H1 (cell line): ENCODE measurements at regions of chr6 and their contacts with region 1.

Region 1: DNA sequence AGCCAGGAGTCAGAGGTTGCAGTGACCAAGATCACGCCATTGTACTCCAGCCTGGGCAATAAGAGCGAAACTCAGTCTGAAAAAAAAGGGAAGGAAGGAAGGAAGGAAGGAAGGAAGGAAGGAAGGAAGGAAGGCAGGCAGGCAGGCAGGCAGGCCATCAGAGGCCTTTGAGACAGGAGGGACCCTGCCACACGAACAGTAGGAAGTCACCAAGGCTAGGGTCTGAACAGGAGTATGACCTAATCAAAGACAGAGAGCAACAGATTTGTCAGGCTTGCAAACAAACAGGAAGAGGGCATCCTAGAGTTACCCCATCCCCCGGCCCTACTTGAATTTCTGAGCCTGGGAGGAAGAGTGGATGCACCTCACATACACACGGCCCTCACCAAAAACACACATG is 67.1 kb downstream of the FGD2 start:
- DNase-seq: no peak
- H3K4me3 ChIP-seq: no peak overlapping the region
- H3K27ac ChIP-seq: no peak overlapping the region
- H3K4me1 ChIP-seq: peaks cover 4 to 14% (median 11%) of the 10 kb centered on the region in 4 experiments
- H3K27me3 ChIP-seq: no peaks in the 10 kb centered on the region
- CTCF ChIP-seq: no peak
- EP300 ChIP-seq: no peak
- POLR2A ChIP-seq: no peak
- RAD21 ChIP-seq: no peak; a peak in 1 of 4 replicates

Region 2: DNA sequence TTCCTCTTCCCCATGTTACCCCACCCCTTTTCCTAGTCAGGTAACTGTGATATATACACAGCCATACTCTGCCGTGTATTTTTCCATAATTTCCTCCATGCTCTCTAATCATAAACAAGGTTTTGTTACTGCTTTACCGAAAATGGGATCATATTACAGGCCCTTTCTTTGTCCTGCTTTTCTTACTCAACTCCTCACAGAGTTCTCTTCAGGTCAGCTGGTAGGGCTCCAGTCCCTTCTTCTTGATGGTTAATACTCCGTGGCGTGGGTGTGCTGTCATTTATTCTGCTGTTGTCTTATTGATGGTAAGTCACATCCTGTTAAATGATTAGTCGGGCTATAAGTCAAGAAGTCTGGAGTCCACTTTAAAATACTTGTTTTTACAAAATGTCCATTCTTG is 142.9 kb before region 1 on chr6:
- CTCF ChIA-PET with region 1: no interaction called
- POLR2A ChIA-PET with region 1: no interaction called
- DNase-seq: no peak
- H3K4me3 ChIP-seq: no peak overlapping the region
- H3K27ac ChIP-seq: no peak overlapping the region
- H3K4me1 ChIP-seq: no peaks in the 10 kb centered on the region
- H3K27me3 ChIP-seq: no peaks in the 10 kb centered on the region
- CTCF ChIP-seq: no peak
- EP300 ChIP-seq: no peak
- POLR2A ChIP-seq: no peak
- RAD21 ChIP-seq: no peak

Region 3: DNA sequence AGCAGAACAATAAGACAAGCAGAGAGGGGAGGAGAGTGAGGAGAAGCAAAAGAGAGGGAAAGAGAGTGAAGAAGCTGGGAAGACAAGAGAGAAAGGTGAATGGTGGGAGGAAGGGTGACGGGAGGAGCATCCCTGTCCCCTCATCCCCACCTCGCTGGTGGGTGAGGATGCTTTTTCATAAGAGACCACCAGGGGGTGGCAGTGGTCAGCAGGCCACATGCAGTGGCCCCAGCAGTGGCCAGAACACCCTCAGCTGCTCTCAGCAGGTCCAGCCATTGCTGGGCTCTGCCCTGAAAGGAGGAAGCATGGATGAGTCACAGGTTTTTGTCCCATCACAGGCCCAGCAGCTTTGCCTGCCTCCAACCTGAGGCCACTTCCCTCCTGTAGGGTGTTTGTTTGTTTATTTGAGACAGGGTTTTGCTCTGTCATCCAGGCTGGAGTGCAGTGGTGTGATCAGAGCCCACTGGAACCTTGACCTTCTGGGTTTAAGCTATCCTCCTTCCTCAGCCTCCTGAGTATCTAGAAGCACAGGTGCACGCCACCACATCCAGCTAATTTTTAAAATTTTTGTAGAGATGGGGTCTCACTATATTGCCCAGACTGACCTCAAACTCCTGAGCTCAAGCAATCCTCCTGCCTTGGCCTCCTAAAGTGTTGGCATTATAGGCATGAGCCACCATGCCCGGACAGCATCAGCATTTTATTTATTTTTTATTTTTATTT is 43.1 kb before region 1 on chr6:
- CTCF ChIA-PET with region 1: interaction called, 14 read pairs
- POLR2A ChIA-PET with region 1: no interaction called
- DNase-seq: peak in 1 of 2 experiments; percentile 82
- H3K4me3 ChIP-seq: no peak overlapping the region
- H3K27ac ChIP-seq: no peak overlapping the region; the same call in 1 of the 2 replicates
- H3K4me1 ChIP-seq: no peaks in the 10 kb centered on the region
- H3K27me3 ChIP-seq: no peaks in the 10 kb centered on the region
- CTCF ChIP-seq: peak; percentile 76 to 88 (median 80)
- EP300 ChIP-seq: no peak
- POLR2A ChIP-seq: no peak
- RAD21 ChIP-seq: peak; percentile 82 to 84

Region 4: GRCh38 chr6:37059344-37060206 is 13.0 kb before region 1 on chr6:
- CTCF ChIA-PET with region 1: interaction called, 91 read pairs
- POLR2A ChIA-PET with region 1: interaction called, 18 read pairs
- DNase-seq: peak in 1 of 2 experiments; percentile 82
- H3K4me3 ChIP-seq: peak overlapping the region in 3 of 4 experiments; percentile 20 to 46 (median 24); a peak in 4 of 8 replicates
- H3K27ac ChIP-seq: peak overlapping the region; percentile 94
- H3K4me1 ChIP-seq: peaks cover 4 to 31% (median 22%) of the 10 kb centered on the region in 4 experiments
- H3K27me3 ChIP-seq: no peaks in the 10 kb centered on the region
- CTCF ChIP-seq: peak in 2 of 3 experiments; percentile 73 to 82; a peak in 3 of 4 replicates
- EP300 ChIP-seq: peak in 1 of 2 experiments; percentile 19; a peak in 1 of 3 replicates
- POLR2A ChIP-seq: peak in 1 of 2 experiments; percentile 78; a peak in 2 of 3 replicates
- RAD21 ChIP-seq: peak; percentile 82 to 83

Region 5: DNA sequence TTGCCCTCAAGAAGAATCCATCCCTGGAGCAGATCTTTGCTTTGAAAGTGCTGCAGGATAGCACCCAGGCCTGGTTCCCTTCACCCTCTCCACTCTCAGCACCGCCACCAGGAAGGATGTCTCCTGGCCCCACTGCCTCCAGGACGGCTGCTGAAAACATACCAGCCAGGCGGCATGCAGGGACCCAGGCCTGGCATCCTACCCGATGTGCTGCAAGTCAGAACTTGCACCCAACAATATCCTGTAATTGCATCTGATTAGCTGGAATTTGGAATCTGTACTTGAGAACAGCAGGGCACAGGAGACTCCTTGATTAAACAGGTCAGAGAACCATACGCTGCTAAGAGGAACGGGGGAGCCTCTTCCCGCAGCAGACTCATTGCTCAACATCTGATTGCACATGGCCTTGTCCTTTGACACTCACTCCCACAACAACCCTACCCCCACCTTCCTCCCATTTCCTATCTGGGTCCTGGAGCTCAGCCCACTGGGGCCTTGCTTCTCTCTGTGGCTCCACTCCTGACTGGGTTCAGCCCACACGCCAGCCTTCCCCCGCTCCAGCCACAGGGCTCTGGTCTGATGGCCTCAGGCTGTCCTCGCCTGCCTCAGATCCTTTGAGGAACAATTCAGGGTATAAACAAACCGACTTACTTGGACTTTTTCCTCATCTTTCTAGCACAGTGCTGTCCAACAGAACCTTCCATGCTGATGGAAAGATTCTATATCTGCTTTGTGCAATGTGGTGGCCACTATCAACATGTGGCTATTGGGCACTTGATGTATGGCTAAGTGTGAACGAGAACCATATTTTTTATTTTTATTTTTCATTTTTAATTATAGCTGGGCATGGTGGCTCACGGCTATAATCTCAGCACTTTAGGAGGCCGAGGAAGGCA is 11.0 kb after region 1 on chr6:
- CTCF ChIA-PET with region 1: interaction called, 7 read pairs
- POLR2A ChIA-PET with region 1: interaction called, 13 read pairs
- DNase-seq: no peak
- H3K4me3 ChIP-seq: no peak overlapping the region
- H3K27ac ChIP-seq: no peak overlapping the region
- H3K4me1 ChIP-seq: peaks cover 0 to 2% (median 0%) of the 10 kb centered on the region in 4 experiments; a peak in 1 of 7 replicates
- H3K27me3 ChIP-seq: no peaks in the 10 kb centered on the region
- CTCF ChIP-seq: no peak
- EP300 ChIP-seq: no peak
- POLR2A ChIP-seq: no peak
- RAD21 ChIP-seq: no peak

Region 6: GRCh38 chr6:37125783-37126492 is 53.4 kb after region 1 on chr6:
- CTCF ChIA-PET with region 1: no interaction called
- POLR2A ChIA-PET with region 1: interaction called, 10 read pairs
- DNase-seq: peak; percentile 74 to 81
- H3K4me3 ChIP-seq: peak overlapping the region; percentile 12 to 58 (median 39); a peak in 7 of 8 replicates
- H3K27ac ChIP-seq: peak overlapping the region; percentile 94
- H3K4me1 ChIP-seq: peaks cover 19 to 42% (median 31%) of the 10 kb centered on the region in 4 experiments
- H3K27me3 ChIP-seq: no peaks in the 10 kb centered on the region
- CTCF ChIP-seq: no peak
- EP300 ChIP-seq: peak in 1 of 2 experiments; percentile 26; a peak in 1 of 3 replicates
- POLR2A ChIP-seq: peak in 1 of 2 experiments; percentile 53; a peak in 2 of 3 replicates
- RAD21 ChIP-seq: peak in 1 of 2 experiments; percentile 0; a peak in 1 of 4 replicates

Region 7: DNA sequence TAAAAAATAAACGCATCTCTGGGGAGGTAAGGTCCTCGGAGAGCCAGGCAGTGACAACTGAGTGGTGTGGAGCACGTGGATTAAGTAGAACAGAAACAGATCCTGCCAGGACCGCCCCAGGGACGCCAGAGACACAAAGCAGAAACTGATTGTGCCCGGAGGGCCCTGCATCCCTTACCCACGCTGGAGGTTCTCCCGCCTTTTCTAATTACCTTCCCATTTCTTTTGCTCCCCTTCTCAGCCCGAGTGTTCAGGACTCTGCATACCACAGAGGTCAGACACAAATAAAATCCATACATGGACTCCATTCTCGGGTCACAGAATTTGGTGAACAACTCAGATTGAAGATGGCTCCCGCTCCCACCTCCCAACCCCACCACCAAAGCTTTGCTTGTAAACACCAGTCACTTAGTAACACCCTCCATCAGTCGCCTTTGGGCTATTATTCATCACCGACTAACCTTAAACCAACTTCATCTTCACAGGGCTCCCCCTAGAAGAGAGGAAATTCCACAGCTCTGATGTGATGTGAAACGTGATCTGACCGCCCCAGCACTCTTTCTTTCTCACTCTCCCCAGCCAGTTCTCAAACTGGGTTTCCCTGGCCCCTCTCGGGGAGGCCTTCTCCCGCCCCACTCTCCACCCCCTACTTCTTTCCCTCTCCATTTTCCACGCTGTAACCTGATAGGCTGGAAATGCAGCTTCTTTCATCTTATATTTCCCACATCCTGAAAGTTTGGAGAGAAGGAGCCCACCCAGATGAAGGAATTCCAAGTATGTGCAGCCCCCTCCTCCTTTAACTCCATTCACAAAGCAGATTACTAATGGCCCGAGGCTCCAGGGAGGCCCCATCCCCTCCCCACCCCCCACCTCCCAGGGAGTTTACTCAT is 64.9 kb after region 1 on chr6:
- CTCF ChIA-PET with region 1: interaction called, 3 read pairs
- POLR2A ChIA-PET with region 1: interaction called, 18 read pairs
- DNase-seq: peak; percentile 77 to 93
- H3K4me3 ChIP-seq: peak overlapping the region; percentile 49 to 90 (median 87)
- H3K27ac ChIP-seq: peak overlapping the region; percentile 98
- H3K4me1 ChIP-seq: peaks cover 15 to 37% (median 28%) of the 10 kb centered on the region in 4 experiments
- H3K27me3 ChIP-seq: no peaks in the 10 kb centered on the region
- CTCF ChIP-seq: no peak
- EP300 ChIP-seq: peak; percentile 29 to 86; a peak in 2 of 3 replicates
- POLR2A ChIP-seq: peak in 1 of 2 experiments; percentile 95; a peak in 2 of 3 replicates
- RAD21 ChIP-seq: peak; percentile 18 to 28; a peak in 2 of 4 replicates

Region 8: GRCh38 chr6:37547564-37548061 is 475.1 kb after region 1 on chr6:
- CTCF ChIA-PET with region 1: no interaction called
- POLR2A ChIA-PET with region 1: no interaction called
- DNase-seq: no peak
- H3K4me3 ChIP-seq: no peak overlapping the region
- H3K27ac ChIP-seq: no peak overlapping the region
- H3K4me1 ChIP-seq: no peaks in the 10 kb centered on the region; a peak in 1 of 7 replicates
- H3K27me3 ChIP-seq: no peaks in the 10 kb centered on the region; a peak in 1 of 7 replicates
- CTCF ChIP-seq: no peak
- EP300 ChIP-seq: no peak
- POLR2A ChIP-seq: no peak
- RAD21 ChIP-seq: no peak